B cell (primary cell): ENCODE measurements at regions of chr19 and their contacts with region 1.

Region 1: DNA sequence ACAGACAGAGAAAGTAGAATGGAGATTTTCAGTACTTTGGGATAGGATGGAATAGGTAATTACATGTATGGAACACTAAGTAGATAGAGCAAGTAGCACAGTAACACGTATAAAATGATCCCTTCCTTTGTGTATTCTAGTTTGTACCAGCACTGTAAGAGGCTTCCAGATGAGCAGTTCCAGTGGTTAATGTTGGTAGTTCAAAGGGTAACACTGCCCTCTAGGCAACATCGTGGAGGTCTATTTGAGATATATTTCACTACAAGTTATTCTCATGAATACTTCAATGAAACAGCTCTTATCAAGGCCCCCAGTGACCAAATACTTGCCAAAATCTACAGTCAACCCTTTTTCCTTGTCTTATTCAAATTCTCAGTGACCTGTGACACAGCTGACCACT is 13.5 kb upstream of the ZNF563 start:
- DNase-seq: peak; percentile 61
- ATAC-seq: peak; percentile 36
- H3K4me3 ChIP-seq: no peak overlapping the region
- H3K4me3 Mint-ChIP-seq: no peak overlapping the region
- H3K27ac ChIP-seq: no peak overlapping the region
- H3K27ac Mint-ChIP-seq: no peak overlapping the region
- H3K4me1 ChIP-seq: no peaks in the 10 kb centered on the region
- H3K4me1 Mint-ChIP-seq: no peaks in the 10 kb centered on the region
- H3K27me3 ChIP-seq: no peaks in the 10 kb centered on the region
- H3K27me3 Mint-ChIP-seq: no peaks in the 10 kb centered on the region
- CTCF ChIP-seq: peak; percentile 47

Region 2: GRCh38 chr19:12202250-12202649 is 144.6 kb before region 1 on chr19:
- CTCF ChIA-PET with region 1: interaction called, 7 read pairs
- POLR2A ChIA-PET with region 1: no interaction called
- intact Hi-C with region 1: loop called (anchors 1 kb)
- DNase-seq: peak; percentile 53
- ATAC-seq: peak; percentile 33
- H3K4me3 ChIP-seq: no peak overlapping the region
- H3K4me3 Mint-ChIP-seq: no peak overlapping the region
- H3K27ac ChIP-seq: no peak overlapping the region
- H3K27ac Mint-ChIP-seq: no peak overlapping the region
- H3K4me1 ChIP-seq: peaks cover 0 to 3% of the 10 kb centered on the region in 2 donors
- H3K4me1 Mint-ChIP-seq: peaks cover 9% of the 10 kb centered on the region
- H3K27me3 ChIP-seq: no peaks in the 10 kb centered on the region
- H3K27me3 Mint-ChIP-seq: no peaks in the 10 kb centered on the region
- CTCF ChIP-seq: peak; percentile 30